ENCODE measurements at regions of chr17 and their contacts with region 1.

Region 1: GRCh38 chr17:27654654-27655524 is 23.9 kb downstream of the LGALS9 start:
- DNase-seq: peak; percentile 65
- H3K4me3 Mint-ChIP-seq: no peak overlapping the region
- H3K27ac Mint-ChIP-seq: no peak overlapping the region
- H3K4me1 Mint-ChIP-seq: no peaks in the 10 kb centered on the region
- H3K27me3 Mint-ChIP-seq: peaks cover 13% of the 10 kb centered on the region
- CTCF ChIP-seq: peak; percentile 93

Region 2: DNA sequence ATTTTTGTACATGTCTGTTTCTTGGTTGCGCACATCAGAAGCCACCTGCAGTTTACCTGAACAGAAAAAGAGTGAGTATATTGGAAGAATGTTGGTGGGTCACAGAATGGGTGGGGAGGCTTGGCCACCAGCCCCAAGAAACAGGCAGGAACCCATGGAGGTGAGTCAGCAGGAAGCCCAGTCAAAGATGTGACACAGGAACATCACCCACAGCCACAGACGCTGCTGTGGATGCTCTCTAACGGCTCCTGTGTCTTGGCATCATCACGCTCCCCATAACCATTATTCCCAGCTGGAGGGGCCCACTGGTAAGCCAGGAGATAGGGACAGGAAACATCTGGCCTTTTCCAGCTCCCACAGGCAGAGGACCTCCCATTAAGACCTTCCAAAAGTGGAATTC is 454.9 kb before region 1 on chr17:
- CTCF ChIA-PET with region 1: no interaction called
- POLR2A ChIA-PET with region 1: no interaction called
- intact Hi-C with region 1: loop called (anchors 10 kb)
- DNase-seq: no peak
- H3K4me3 Mint-ChIP-seq: no peak overlapping the region
- H3K27ac Mint-ChIP-seq: no peak overlapping the region
- H3K4me1 Mint-ChIP-seq: no peaks in the 10 kb centered on the region
- H3K27me3 Mint-ChIP-seq: no peaks in the 10 kb centered on the region
- CTCF ChIP-seq: no peak

Region 3: DNA sequence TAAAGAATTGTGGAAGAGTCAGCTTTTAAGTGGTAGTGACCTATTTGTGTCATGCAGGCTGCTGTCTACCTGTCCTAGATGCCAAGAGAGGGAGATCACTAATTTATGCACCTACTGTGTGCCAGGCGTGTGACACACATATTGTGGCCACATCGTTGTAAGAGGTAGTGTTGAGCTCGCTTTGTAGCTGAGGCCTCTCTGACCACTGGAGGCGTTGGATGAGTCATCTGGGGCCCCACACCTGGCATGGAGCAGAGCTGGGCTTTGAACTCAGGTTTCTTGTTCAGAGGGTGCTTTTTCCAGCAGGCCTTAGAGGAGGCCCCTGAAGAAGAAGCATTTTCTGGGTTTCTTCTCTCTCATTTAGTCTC is 76.2 kb before region 1 on chr17:
- CTCF ChIA-PET with region 1: no interaction called
- POLR2A ChIA-PET with region 1: no interaction called
- intact Hi-C with region 1: no loop called
- DNase-seq: peak; percentile 69
- H3K4me3 Mint-ChIP-seq: no peak overlapping the region
- H3K27ac Mint-ChIP-seq: no peak overlapping the region
- H3K4me1 Mint-ChIP-seq: peaks cover 41% of the 10 kb centered on the region
- H3K27me3 Mint-ChIP-seq: no peaks in the 10 kb centered on the region
- CTCF ChIP-seq: no peak

Region 4: DNA sequence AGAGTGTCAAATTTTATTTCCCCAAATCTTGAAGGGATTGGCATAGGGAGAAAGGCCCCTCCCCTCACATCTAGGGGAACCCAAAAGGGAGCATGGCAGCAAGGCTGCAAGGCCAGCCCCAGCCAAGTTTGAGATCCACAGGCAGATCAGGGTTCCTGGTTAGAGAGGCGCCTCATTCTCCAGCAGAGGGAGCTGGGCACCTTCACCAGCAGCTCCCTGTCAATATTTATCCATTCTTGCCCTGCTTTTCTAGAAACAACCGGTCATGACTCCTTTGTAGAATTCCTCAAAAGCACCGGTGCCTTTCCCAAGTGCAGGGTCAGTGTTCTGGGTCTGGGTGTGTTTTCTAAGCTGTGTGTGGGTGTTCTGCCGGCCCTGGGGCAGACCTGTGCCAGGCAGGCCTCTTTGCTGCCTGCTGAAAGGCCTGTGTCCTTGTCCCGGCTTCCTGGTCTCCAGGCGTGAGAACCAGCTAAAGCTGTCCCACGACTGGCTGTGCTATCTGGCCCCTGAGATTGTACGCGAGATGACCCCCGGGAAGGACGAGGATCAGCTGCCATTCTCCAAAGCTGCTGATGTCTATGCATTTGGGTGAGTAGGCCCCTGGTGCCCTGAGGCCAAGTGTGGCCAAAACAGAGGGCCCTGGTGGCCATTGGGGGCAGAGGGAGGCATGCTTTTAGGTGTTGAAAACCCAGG is 45.1 kb before region 1 on chr17:
- CTCF ChIA-PET with region 1: interaction called, 580 read pairs
- POLR2A ChIA-PET with region 1: interaction called, 3 read pairs
- intact Hi-C with region 1: loop called (anchors 1 kb)
- DNase-seq: peak; percentile 57
- H3K4me3 Mint-ChIP-seq: no peak overlapping the region
- H3K27ac Mint-ChIP-seq: no peak overlapping the region
- H3K4me1 Mint-ChIP-seq: peaks cover 5% of the 10 kb centered on the region
- H3K27me3 Mint-ChIP-seq: no peaks in the 10 kb centered on the region
- CTCF ChIP-seq: peak; percentile 61

Region 5: GRCh38 chr17:27640790-27641189 is 14.1 kb before region 1 on chr17:
- CTCF ChIA-PET with region 1: interaction called, 14 read pairs
- POLR2A ChIA-PET with region 1: no interaction called
- intact Hi-C with region 1: no loop called
- DNase-seq: no peak
- H3K4me3 Mint-ChIP-seq: no peak overlapping the region
- H3K27ac Mint-ChIP-seq: no peak overlapping the region
- H3K4me1 Mint-ChIP-seq: peaks cover 16% of the 10 kb centered on the region
- H3K27me3 Mint-ChIP-seq: no peaks in the 10 kb centered on the region
- CTCF ChIP-seq: no peak

Region 6: GRCh38 chr17:27677191-27677590 is 22.3 kb after region 1 on chr17:
- CTCF ChIA-PET with region 1: interaction called, 16 read pairs
- POLR2A ChIA-PET with region 1: no interaction called
- intact Hi-C with region 1: no loop called
- DNase-seq: no peak
- H3K4me3 Mint-ChIP-seq: no peak overlapping the region
- H3K27ac Mint-ChIP-seq: no peak overlapping the region
- H3K4me1 Mint-ChIP-seq: no peaks in the 10 kb centered on the region
- H3K27me3 Mint-ChIP-seq: peaks cover 62% of the 10 kb centered on the region
- CTCF ChIP-seq: no peak

Region 7: GRCh38 chr17:27805520-27806146 is 150.7 kb after region 1 on chr17:
- CTCF ChIA-PET with region 1: interaction called, 11 read pairs
- POLR2A ChIA-PET with region 1: no interaction called
- intact Hi-C with region 1: no loop called
- DNase-seq: peak; percentile 88
- H3K4me3 Mint-ChIP-seq: peak overlapping the region; percentile 68
- H3K27ac Mint-ChIP-seq: peak overlapping the region; percentile 88
- H3K4me1 Mint-ChIP-seq: peaks cover 7% of the 10 kb centered on the region
- H3K27me3 Mint-ChIP-seq: no peaks in the 10 kb centered on the region
- CTCF ChIP-seq: peak; percentile 71

Measured in MCF 10A (cell line).